B cell (primary cell): ENCODE measurements at regions of chr11 and their contacts with region 1.

Region 1: GRCh38 chr11:2992234-2992996 is at the start of gene NAP1L4:
- DNase-seq: peak; percentile 98
- ATAC-seq: peak; percentile 88
- H3K4me3 ChIP-seq: peak within 1 kb of the TSS; percentile 71 to 97 (median 88)
- H3K4me3 Mint-ChIP-seq: peak within 1 kb of the TSS; percentile 96
- H3K27ac ChIP-seq: peak within 1 kb of the TSS; percentile 71 to 87
- H3K27ac Mint-ChIP-seq: peak within 1 kb of the TSS; percentile 99
- H3K4me1 ChIP-seq: peaks cover 40 to 45% of the 10 kb centered on the region in 2 donors
- H3K4me1 Mint-ChIP-seq: peaks cover 43% of the 10 kb centered on the region
- H3K27me3 ChIP-seq: no peaks in the 10 kb centered on the region
- H3K27me3 Mint-ChIP-seq: no peaks in the 10 kb centered on the region
- CTCF ChIP-seq: no peak
- total RNA-seq, gene NAP1L4: 133 and 159 TPM in 2 replicates

Region 2: GRCh38 chr11:2390725-2391151 is 601.7 kb before region 1 on chr11:
- CTCF ChIA-PET with region 1: no interaction called
- POLR2A ChIA-PET with region 1: no interaction called
- intact Hi-C with region 1: loop called (anchors 5 kb)
- DNase-seq: no peak
- ATAC-seq: no peak
- H3K4me3 ChIP-seq: no peak overlapping the region
- H3K4me3 Mint-ChIP-seq: peak overlapping the region; percentile 55
- H3K27ac ChIP-seq: no peak overlapping the region
- H3K27ac Mint-ChIP-seq: peak overlapping the region; percentile 66
- H3K4me1 ChIP-seq: peaks cover 100% of the 10 kb centered on the region in 2 donors
- H3K4me1 Mint-ChIP-seq: peaks cover 83% of the 10 kb centered on the region
- H3K27me3 ChIP-seq: no peaks in the 10 kb centered on the region
- H3K27me3 Mint-ChIP-seq: no peaks in the 10 kb centered on the region
- CTCF ChIP-seq: no peak

Region 3: DNA sequence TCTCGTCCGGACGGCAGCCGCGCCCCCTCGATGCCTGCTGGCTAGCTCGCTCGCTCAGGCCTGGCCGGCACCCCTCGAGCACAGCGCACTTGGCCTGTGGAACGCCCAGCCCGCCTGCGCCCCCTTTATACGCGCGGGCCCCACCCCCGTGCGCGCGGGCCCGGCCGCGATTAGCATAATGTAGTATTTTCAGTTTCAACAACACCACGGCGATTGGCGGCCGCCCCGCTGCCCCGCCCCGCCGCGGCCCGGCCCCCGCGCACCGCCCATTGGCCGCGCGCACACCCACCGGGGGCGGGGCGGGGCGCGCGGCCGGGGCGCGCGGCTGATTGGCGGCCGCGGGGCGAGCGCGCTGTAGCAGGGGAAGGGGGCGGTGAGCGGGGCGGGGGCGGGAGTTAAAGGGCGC is 106.7 kb before region 1 on chr11 and contains the start of gene CDKN1C:
- CTCF ChIA-PET with region 1: interaction called, 3 read pairs
- POLR2A ChIA-PET with region 1: no interaction called
- intact Hi-C with region 1: loop called (anchors 1 kb)
- DNase-seq: peak; percentile 90
- ATAC-seq: peak; percentile 91
- H3K4me3 ChIP-seq: peak within 1 kb of the TSS; percentile 39 to 93 (median 70)
- H3K4me3 Mint-ChIP-seq: peak within 1 kb of the TSS; percentile 95
- H3K27ac ChIP-seq: no peak within 1 kb of the TSS
- H3K27ac Mint-ChIP-seq: peak within 1 kb of the TSS; percentile 56
- H3K4me1 ChIP-seq: peaks cover 9 to 20% of the 10 kb centered on the region in 2 donors
- H3K4me1 Mint-ChIP-seq: peaks cover 16% of the 10 kb centered on the region
- H3K27me3 ChIP-seq: peaks cover 0 to 34% (median 7%) of the 10 kb centered on the region in 4 experiments
- H3K27me3 Mint-ChIP-seq: peaks cover 15% of the 10 kb centered on the region
- CTCF ChIP-seq: no peak
- total RNA-seq, gene CDKN1C: 5.9 and 8.0 TPM in 2 replicates

Region 4: DNA sequence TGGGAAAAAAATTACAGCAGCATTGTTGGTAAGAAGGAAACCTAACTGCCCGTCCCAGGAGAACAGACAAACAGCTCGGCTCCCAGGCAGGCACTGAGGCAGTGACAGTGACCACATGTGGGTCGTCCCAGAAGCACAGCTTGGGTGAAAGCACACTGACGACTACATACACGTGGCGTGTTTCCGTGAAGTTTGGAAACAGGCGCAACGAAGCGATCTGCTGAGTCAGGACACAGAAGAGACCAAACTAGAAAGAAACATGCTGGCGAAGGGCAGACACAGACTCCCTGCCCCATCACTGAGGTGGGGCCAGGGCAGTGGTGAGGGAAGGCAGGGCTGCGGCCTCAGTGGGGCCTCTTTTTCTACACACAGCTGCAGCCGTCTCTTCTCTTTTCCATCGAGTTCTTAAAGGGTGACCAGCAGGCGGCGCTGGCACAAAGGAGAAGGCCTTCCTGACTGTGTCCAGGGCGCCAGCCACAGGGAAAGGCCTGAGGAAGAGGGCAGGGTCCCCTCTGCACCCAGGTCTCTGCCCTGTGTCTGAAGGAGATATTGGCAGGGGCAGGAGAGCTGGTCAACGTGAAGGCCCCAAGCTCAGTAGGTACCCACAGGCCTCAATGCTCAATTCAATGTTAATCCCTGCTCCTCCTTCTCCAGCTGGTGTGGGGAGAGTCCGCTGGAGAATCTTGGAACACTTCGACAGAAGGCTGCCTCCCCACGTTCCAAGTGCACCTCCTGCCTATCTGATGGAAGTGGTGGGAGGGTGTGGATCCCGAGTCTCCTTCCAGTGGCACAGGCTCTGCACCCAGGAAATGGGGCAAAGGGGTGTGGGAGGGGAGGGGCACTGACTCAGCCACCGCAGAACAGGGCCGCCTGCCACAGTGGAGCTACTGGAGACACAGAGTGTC is 44.9 kb after region 1 on chr11:
- CTCF ChIA-PET with region 1: interaction called, 3 read pairs
- POLR2A ChIA-PET with region 1: no interaction called
- intact Hi-C with region 1: loop called (anchors 5 kb)
- DNase-seq: peak; percentile 51
- ATAC-seq: peak; percentile 34
- H3K4me3 ChIP-seq: no peak overlapping the region
- H3K4me3 Mint-ChIP-seq: peak overlapping the region; percentile 9
- H3K27ac ChIP-seq: peak overlapping the region in 1 of 2 donors; percentile 42
- H3K27ac Mint-ChIP-seq: peak overlapping the region; percentile 39
- H3K4me1 ChIP-seq: peaks cover 24 to 30% of the 10 kb centered on the region in 2 donors
- H3K4me1 Mint-ChIP-seq: peaks cover 26% of the 10 kb centered on the region
- H3K27me3 ChIP-seq: no peaks in the 10 kb centered on the region
- H3K27me3 Mint-ChIP-seq: no peaks in the 10 kb centered on the region
- CTCF ChIP-seq: peak; percentile 50

Region 5: DNA sequence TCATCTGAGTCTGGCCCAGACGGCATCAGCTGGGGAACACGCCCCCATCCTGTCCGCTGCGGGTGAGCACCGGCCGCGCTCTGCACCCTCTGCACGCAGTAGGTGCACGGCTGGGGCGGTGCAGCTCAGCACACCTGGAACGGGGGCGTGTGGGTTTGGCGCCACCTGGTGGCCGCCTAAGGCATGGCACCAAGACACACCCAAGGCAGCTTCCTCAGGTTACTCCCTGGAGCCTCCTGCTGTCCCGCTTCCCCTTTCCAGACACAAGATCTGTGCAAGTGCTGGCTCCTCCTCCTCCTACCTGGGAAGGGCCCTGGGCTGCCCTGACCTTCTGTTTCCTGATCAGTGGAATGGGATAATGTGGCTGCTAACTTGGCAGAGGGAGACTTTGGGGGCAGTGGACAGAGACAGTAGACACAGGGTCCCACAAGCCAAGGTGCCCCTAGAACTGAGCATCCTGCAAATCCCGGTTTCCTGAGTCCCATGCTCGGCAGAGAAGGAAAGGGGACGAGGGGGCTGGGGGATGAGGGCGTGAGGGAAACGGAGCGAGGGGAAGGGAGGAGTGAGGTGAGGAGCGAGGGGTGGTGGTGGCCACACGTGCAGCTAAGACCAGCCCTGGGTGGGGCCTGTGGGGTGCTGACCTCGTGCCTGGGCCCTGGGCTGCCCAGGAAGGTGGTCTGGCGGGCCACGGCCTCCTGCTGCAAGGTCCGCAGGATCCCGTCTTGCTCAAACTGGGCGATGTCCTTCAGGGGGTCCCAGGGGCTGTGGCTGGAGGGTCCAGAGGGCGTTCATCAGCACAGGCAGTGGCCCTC is 99.6 kb after region 1 on chr11:
- CTCF ChIA-PET with region 1: interaction called, 6 read pairs
- POLR2A ChIA-PET with region 1: interaction called, 3 read pairs
- intact Hi-C with region 1: loop called (anchors 5 kb)
- DNase-seq: peak; percentile 83
- ATAC-seq: peak; percentile 92
- H3K4me3 ChIP-seq: no peak overlapping the region
- H3K4me3 Mint-ChIP-seq: no peak overlapping the region
- H3K27ac ChIP-seq: no peak overlapping the region
- H3K27ac Mint-ChIP-seq: no peak overlapping the region
- H3K4me1 ChIP-seq: peaks cover 0 to 6% of the 10 kb centered on the region in 2 donors
- H3K4me1 Mint-ChIP-seq: no peaks in the 10 kb centered on the region
- H3K27me3 ChIP-seq: peaks cover 0 to 7% (median 0%) of the 10 kb centered on the region in 4 experiments
- H3K27me3 Mint-ChIP-seq: peaks cover 18% of the 10 kb centered on the region
- CTCF ChIP-seq: peak; percentile 98